Cardiac septum (tissue), 1 donor: ENCODE measurements at regions of chr17 and their contacts with region 1.

Region 1: DNA sequence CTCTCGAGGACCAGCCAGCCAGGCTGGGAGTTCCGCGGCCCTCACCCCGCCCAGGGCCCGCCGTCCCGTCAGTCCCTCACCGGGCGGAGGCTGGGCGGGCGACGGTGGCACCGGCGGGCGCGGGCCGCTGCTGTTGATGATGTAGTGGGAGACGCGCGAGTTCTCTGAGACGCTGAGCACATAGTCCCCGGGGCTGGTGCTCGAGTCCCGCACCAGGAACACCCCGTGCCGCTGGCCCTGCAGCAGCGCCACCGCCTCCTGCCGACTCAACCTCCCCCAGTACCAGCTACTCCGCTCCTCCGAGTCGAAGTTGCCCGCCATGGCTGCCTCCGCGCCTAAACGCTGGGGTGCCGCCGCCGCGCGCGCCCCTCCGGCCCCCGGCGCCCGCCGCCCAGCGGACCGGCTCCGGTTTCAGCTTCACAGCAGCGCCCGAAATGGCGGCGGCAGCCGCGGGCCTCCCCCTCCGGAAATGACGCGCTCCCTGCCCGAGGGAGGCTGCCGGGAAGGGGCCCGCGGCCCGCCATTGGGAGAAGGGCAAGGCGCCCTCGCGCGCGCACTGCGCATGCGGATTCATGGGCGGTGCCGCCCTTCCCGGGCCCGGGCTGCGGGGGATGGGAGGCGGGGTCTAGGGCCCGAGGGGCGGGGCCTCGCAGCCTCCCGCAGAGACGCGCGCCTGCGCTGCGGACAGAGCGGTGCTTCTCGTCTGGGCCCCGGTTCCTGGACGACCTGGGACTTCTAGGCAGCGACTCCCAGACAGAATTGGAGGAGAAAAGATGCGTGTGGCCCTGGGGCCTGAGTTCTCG is at the start of gene CRK:
- DNase-seq: peak; percentile 99
- total RNA-seq, gene CRK: 43.4 TPM

Region 2: GRCh38 chr17:1365445-1366039 is 90.5 kb before region 1 on chr17:
- intact Hi-C with region 1: loop called (anchors 5 kb)
- DNase-seq: peak; percentile 79

Region 3: GRCh38 chr17:1485422-1486376 is 29.7 kb after region 1 on chr17:
- intact Hi-C with region 1: loop called (anchors 2 kb)
- DNase-seq: peak; percentile 85